Psoas muscle (tissue), 8 donors: ENCODE measurements at regions of chr9 and their contacts with region 1.

Region 1: GRCh38 chr9:114082017-114082762 is 4.1 kb upstream of the AMBP start:
- DNase-seq: peak; percentile 82 to 88
- ATAC-seq: peak; percentile 90 to 97 (median 92)
- H3K4me3 ChIP-seq: no peak overlapping the region
- H3K27ac ChIP-seq: no peak overlapping the region
- H3K4me1 ChIP-seq: no peaks in the 10 kb centered on the region
- H3K27me3 ChIP-seq: no peaks in the 10 kb centered on the region
- CTCF ChIP-seq: peak; percentile 88

Region 2: GRCh38 chr9:114250235-114250568 is 168.0 kb after region 1 on chr9:
- intact Hi-C with region 1: no loop called
- DNase-seq: peak; percentile 82 to 92
- ATAC-seq: peak; percentile 80 to 91 (median 86)
- H3K4me3 ChIP-seq: peak overlapping the region; percentile 38
- H3K27ac ChIP-seq: peak overlapping the region; percentile 55
- H3K4me1 ChIP-seq: peaks cover 38% of the 10 kb centered on the region
- H3K27me3 ChIP-seq: no peaks in the 10 kb centered on the region
- CTCF ChIP-seq: no peak

Region 3: DNA sequence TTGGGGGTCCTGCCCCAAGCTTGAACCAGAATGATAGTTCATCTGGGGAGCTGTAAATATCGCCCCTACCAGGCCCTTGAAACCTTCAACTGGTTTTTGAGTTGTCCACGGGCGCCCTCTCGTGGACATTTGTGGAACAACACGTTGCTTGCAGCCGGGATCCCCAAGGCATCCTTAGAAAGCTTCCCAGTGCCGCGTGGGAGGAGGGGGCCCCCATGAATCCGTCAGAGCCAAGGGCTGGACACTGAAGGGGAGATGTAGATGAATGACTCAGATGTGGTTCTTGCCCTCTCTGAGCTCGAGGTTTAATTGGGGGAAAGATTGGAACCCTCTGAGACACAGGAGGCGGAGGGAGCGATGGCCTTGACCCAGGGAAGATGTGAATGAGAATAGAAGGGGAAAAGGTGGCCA is 208.9 kb after region 1 on chr9:
- intact Hi-C with region 1: loop called (anchors 2 to 5 kb)
- DNase-seq: peak; percentile 71 to 84
- ATAC-seq: peak; percentile 67 to 89 (median 79)
- H3K4me3 ChIP-seq: no peak overlapping the region
- H3K27ac ChIP-seq: no peak overlapping the region
- H3K4me1 ChIP-seq: no peaks in the 10 kb centered on the region
- H3K27me3 ChIP-seq: no peaks in the 10 kb centered on the region
- CTCF ChIP-seq: peak; percentile 95

Region 4: DNA sequence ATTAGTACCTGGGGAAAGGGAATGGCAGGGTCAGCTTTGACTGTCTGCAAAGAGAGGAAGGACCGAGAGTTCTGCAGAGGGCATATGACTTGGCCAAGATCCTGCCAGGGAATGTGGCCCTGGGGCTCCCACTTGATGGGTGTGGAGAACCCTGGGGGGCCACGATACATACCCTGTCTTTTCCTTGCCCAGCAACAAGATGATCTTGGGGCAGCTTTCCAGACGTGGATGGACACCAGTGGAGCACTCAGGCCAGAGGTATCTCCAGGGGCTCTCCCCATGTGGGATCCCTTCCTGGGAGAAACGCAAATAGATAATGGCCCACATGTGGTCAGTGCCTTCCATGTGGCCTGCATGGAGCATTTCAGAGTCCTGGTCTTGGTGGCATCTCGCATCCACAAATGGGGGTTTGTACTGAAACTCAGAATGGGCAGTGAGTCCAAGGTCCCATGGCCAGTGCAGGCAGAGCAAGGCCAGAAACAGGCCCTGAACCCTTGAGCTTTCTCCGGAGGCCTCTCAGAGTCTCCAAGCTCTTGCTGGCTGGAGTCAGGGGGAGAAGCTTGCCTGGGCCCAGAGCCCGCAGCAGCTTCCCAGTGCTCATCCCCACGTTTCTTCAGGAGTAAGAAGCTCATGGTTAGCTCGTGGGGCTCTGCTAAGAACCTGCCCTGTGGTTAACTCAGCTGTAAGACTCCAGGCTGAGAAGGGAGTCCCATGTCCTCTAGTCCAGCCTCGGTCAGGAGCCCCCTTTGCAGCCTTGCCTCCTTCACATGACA is 222.4 kb after region 1 on chr9:
- intact Hi-C with region 1: loop called in 1 of 2 experiments (anchors 1 kb)
- DNase-seq: no peak
- ATAC-seq: no peak
- H3K4me3 ChIP-seq: no peak overlapping the region
- H3K27ac ChIP-seq: no peak overlapping the region
- H3K4me1 ChIP-seq: no peaks in the 10 kb centered on the region
- H3K27me3 ChIP-seq: no peaks in the 10 kb centered on the region
- CTCF ChIP-seq: no peak